ENCODE measurements at regions of chr7 and their contacts with region 1.

Region 1: DNA sequence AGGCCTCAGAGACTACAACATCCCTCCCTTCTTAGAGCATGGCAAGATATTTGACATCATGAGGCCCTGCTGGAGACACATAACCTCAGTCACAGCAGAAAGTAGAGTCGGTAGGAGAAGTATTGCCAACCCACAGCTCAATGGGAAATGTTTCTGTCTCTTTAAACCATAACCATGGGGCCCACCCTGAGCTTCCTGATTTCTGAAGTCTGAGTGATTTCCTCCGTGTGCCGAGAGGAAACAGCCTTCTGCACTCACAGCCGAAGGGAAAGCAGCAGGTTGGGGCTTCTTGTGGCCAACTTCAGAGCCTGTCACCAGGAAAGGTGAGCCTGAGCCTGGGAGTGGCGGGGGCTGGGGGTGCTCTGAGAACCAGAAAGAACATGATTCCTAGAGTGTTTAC is at the start of gene GIMAP1:
- DNase-seq: peak; percentile 36 to 78
- ATAC-seq: peak; percentile 79 to 95 (median 91)
- H3K4me3 ChIP-seq: peak within 1 kb of the TSS; percentile 30 to 71 (median 60)
- H3K27ac ChIP-seq: peak within 1 kb of the TSS; percentile 81 to 94 (median 88)
- H3K4me1 ChIP-seq: peaks cover 0 to 51% (median 8%) of the 10 kb centered on the region in 9 donors
- H3K27me3 ChIP-seq: no peaks in the 10 kb centered on the region
- CTCF ChIP-seq: no peak
- total RNA-seq, gene GIMAP1: 2.4 to 11.2 (median 4.3) TPM

Region 2: GRCh38 chr7:150311711-150312110 is 404.7 kb before region 1 on chr7:
- intact Hi-C with region 1: no loop called
- DNase-seq: no peak
- ATAC-seq: no peak
- H3K4me3 ChIP-seq: no peak overlapping the region
- H3K27ac ChIP-seq: no peak overlapping the region
- H3K4me1 ChIP-seq: peaks cover 0 to 3% (median 0%) of the 10 kb centered on the region in 9 donors
- H3K27me3 ChIP-seq: peaks cover 0 to 5% (median 0%) of the 10 kb centered on the region in 7 donors
- CTCF ChIP-seq: no peak

Region 3: GRCh38 chr7:150520145-150520544 is 196.2 kb before region 1 on chr7:
- intact Hi-C with region 1: loop called in 1 of 10 experiments (anchors 5 kb)
- DNase-seq: no peak
- ATAC-seq: peak in 2 of 8 donors; percentile 47 to 52
- H3K4me3 ChIP-seq: peak overlapping the region in 9 of 10 donors; percentile 9 to 68 (median 57)
- H3K27ac ChIP-seq: peak overlapping the region; percentile 27 to 95 (median 80)
- H3K4me1 ChIP-seq: peaks cover 0 to 10% (median 0%) of the 10 kb centered on the region in 9 donors
- H3K27me3 ChIP-seq: no peaks in the 10 kb centered on the region
- CTCF ChIP-seq: no peak

Region 4: DNA sequence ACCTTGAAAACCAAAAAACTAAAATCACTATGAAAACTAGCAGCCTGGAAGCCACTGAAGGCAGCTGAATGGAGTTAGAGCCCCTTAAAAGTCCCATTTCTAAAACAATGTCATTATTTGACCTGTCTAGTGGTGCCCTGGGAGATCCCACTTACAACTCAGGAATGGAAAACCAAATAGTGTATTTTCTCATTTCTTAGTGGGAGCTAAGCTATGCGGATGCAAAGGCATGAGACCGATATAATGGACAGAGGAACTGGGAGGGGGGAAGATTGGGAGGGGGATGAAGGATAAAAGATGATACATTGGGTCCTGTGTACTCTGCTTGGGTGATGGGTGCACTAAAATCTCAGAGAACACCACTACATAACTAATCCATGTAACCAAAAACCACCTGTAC is 40.7 kb before region 1 on chr7:
- intact Hi-C with region 1: loop called in 2 of 10 experiments (anchors 5 kb)
- DNase-seq: no peak
- ATAC-seq: peak in 1 of 8 donors; percentile 51
- H3K4me3 ChIP-seq: peak overlapping the region in 3 of 10 donors; percentile 7 to 18 (median 11)
- H3K27ac ChIP-seq: peak overlapping the region; percentile 6 to 88 (median 68)
- H3K4me1 ChIP-seq: peaks cover 0 to 43% (median 20%) of the 10 kb centered on the region in 9 donors
- H3K27me3 ChIP-seq: no peaks in the 10 kb centered on the region
- CTCF ChIP-seq: no peak

Region 5: DNA sequence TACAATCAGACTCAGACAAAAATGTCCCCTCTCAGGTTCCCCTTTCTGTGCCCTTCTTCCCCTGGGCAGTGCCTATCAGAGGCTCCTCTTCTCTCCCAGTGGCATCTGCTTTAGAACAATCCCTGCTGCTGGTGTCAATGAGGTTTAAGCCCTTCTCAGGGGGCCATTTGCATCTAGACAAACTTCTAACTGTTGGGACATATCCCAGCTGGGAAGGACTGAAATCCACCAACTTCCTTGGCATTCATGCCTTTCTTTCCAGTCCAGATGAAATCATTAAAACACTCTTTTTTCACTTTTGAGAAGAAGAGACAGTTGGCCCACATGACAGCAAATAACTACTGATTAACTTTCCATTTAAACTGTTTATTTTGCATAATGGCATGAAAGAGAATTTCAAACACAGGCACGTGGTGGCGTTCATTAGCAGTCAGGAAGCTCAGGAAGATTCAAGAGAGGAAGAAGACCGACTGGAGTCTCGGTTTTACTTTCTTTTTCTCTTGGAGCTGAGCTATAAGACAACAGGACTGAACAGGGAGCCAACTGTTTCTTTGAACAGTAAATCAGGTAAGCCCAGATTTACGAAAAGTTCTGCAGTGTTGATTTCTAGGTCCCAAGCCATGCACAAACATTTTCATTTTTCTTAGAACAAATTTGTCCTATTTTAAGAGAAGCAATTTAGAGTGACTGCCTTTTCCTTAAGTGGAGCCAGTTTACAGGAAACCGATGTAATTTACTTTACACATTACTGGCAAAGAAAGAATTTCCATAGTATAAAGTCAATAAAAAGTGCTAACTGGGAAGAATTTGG is 30.9 kb before region 1 on chr7 and contains the start of gene GIMAP2:
- intact Hi-C with region 1: loop called in 1 of 10 experiments (anchors 5 kb)
- DNase-seq: peak in 1 of 2 donors; percentile 23
- ATAC-seq: peak in 7 of 8 donors; percentile 61 to 92 (median 89)
- H3K4me3 ChIP-seq: peak within 1 kb of the TSS; percentile 14 to 67 (median 52)
- H3K27ac ChIP-seq: peak within 1 kb of the TSS; percentile 55 to 94 (median 80)
- H3K4me1 ChIP-seq: peaks cover 0 to 45% (median 12%) of the 10 kb centered on the region in 9 donors
- H3K27me3 ChIP-seq: no peaks in the 10 kb centered on the region
- CTCF ChIP-seq: no peak
- total RNA-seq, gene GIMAP2: 2.1 to 17.5 (median 4.6) TPM

Region 6: DNA sequence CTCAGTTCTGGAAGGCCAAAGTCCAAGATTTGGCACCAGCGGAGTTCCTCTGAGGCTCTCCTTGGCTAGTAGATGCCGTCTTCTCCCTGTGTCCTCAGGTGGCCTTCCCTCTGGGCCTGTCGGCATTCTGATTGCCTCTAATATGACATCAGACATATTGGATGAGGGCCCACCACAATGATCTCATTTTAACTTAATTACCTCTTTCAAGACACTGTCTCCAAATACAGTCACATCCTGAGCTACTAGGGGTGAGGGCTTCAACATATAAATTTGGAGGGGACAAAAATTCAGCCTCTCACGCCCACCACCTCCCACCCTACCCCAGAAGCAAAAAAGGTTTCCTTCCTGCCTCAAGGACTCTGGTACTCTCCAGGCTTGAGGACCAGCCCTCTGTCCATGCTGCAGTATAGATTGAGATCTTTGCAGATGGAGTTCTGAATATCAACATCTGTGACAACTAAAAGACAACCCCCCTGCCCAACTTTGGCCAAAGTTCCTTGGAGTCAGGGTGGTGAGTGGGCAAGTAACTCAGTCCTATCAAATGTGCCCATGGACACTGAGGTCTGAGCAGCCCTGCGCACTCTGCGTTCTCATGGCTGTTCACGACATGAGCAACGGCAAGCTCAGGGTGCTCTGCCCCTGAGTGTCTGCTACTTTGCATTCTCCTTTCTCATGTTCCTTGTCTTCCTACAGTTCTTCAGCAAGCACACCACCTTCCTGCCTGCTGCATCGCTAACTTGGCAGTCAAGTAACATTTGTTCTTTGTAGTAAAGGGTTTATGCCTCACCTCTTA is 72.3 kb after region 1 on chr7:
- intact Hi-C with region 1: no loop called
- DNase-seq: peak; percentile 63 to 83
- ATAC-seq: peak; percentile 20 to 87 (median 76)
- H3K4me3 ChIP-seq: no peak overlapping the region
- H3K27ac ChIP-seq: peak overlapping the region in 9 of 10 donors; percentile 68 to 91 (median 85)
- H3K4me1 ChIP-seq: peaks cover 11 to 71% (median 54%) of the 10 kb centered on the region in 9 donors
- H3K27me3 ChIP-seq: no peaks in the 10 kb centered on the region
- CTCF ChIP-seq: no peak

Region 7: GRCh38 chr7:150799741-150800580 is 83.6 kb after region 1 on chr7 and contains the start of gene TMEM176B:
- intact Hi-C with region 1: no loop called
- DNase-seq: peak; percentile 50 to 72
- ATAC-seq: peak; percentile 82 to 90 (median 88)
- H3K4me3 ChIP-seq: peak within 1 kb of the TSS; percentile 42 to 76 (median 66)
- H3K27ac ChIP-seq: peak within 1 kb of the TSS in 9 of 10 donors; percentile 40 to 81 (median 66)
- H3K4me1 ChIP-seq: peaks cover 0 to 44% (median 17%) of the 10 kb centered on the region in 9 donors
- H3K27me3 ChIP-seq: peaks cover 0 to 50% (median 25%) of the 10 kb centered on the region in 7 donors
- CTCF ChIP-seq: no peak
- total RNA-seq, gene TMEM176B: 19.6 to 149 (median 52.6) TPM